ENCODE measurements at regions of chr10 and their contacts with region 1.

Region 1: GRCh38 chr10:132446661-132447194 is 49.7 kb downstream of the PWWP2B start:
- DNase-seq: peak; percentile 91
- H3K4me3 Mint-ChIP-seq: peak overlapping the region; percentile 67
- H3K27ac Mint-ChIP-seq: peak overlapping the region; percentile 94
- H3K4me1 Mint-ChIP-seq: peaks cover 30% of the 10 kb centered on the region
- H3K27me3 Mint-ChIP-seq: no peaks in the 10 kb centered on the region

Region 2: DNA sequence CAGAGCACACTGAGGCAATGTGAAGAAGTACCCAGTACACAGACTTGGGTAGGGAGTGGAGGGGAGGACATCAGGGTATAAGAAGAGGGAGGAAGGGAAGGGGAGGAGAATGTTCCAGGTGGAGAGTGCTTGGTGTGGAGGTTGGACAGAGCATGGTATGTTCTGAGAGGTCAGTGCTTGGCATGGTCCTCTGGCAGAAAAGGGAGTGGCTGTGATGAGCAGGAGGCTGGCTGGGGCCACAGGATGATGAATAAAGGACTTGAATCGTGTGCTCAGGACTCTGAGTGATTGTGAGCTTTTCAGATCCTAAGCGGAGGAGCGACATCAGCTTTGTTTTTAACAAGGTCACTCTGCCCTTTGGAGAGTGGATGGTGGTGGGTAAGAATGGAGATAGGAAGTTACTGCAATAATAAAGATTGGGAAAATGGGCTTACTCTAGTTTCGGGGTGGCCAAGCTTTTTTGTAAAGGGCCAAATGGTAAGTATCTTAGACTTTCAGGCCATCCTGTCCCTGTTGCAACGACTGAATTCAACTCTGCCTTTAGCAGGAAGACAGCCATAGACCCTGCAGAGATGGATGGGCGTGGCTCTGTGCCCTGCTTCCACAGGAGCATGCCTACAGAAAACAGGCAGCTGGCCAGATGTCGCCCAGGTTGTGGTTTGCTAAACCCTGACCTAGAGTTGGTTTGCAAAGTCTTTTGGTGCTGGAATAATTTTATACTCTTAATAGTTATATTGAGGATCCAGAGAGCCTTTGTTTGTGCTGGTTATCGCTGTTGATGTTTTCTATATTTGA is 537.5 kb before region 1 on chr10:
- CTCF ChIA-PET with region 1: no interaction called
- POLR2A ChIA-PET with region 1: no interaction called
- intact Hi-C with region 1: loop called (anchors 5 kb)
- DNase-seq: peak; percentile 8
- H3K4me3 Mint-ChIP-seq: no peak overlapping the region
- H3K27ac Mint-ChIP-seq: peak overlapping the region; percentile 38
- H3K4me1 Mint-ChIP-seq: peaks cover 73% of the 10 kb centered on the region
- H3K27me3 Mint-ChIP-seq: no peaks in the 10 kb centered on the region

Region 3: GRCh38 chr10:132229834-132230556 is 216.7 kb before region 1 on chr10:
- CTCF ChIA-PET with region 1: no interaction called
- POLR2A ChIA-PET with region 1: no interaction called
- intact Hi-C with region 1: loop called (anchors 5 kb)
- DNase-seq: peak; percentile 54
- H3K4me3 Mint-ChIP-seq: peak overlapping the region; percentile 63
- H3K27ac Mint-ChIP-seq: peak overlapping the region; percentile 78
- H3K4me1 Mint-ChIP-seq: peaks cover 18% of the 10 kb centered on the region
- H3K27me3 Mint-ChIP-seq: no peaks in the 10 kb centered on the region

Region 4: GRCh38 chr10:132331526-132332432 is 114.9 kb before region 1 on chr10 and contains the start of gene LRRC27:
- CTCF ChIA-PET with region 1: no interaction called
- POLR2A ChIA-PET with region 1: no interaction called
- intact Hi-C with region 1: loop called (anchors 2 kb)
- DNase-seq: peak; percentile 99
- H3K4me3 Mint-ChIP-seq: peak within 1 kb of the TSS; percentile 90
- H3K27ac Mint-ChIP-seq: peak within 1 kb of the TSS; percentile 91
- H3K4me1 Mint-ChIP-seq: peaks cover 48% of the 10 kb centered on the region
- H3K27me3 Mint-ChIP-seq: peaks cover 1% of the 10 kb centered on the region
- total RNA-seq, gene LRRC27: 2.5 to 2.8 TPM

Region 5: DNA sequence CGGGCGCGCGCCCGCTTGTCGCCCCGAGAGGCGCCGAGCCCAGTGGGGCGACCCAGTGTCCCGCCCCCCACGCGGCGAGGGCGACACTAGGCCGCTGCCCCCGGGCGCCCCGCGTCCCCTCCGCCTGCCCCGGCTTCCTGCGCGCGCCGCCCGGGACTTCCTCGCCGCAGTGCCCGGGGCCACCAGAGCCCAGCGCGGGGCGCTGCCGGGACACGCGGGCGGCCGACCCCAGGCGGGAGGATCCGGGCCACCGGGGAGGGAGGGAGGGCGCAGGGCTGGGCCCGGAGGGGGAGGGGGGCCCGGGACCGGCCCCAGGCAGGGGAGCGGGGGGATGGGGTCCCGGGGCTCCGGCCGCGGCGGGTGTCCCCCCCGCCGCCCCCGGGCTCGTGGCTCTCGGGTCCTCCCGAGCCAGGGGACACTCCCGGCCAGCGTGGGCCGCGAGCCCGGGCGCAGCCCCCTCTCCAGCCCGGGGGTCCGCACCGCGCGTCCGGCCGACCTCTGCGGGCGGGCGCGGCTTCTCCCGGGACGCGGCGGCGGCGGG is 50.2 kb before region 1 on chr10:
- CTCF ChIA-PET with region 1: interaction called, 8 read pairs
- POLR2A ChIA-PET with region 1: interaction called, 8 read pairs
- intact Hi-C with region 1: loop called (anchors 2 kb)
- DNase-seq: peak; percentile 72
- H3K4me3 Mint-ChIP-seq: no peak overlapping the region
- H3K27ac Mint-ChIP-seq: no peak overlapping the region
- H3K4me1 Mint-ChIP-seq: peaks cover 12% of the 10 kb centered on the region
- H3K27me3 Mint-ChIP-seq: no peaks in the 10 kb centered on the region

Region 6: GRCh38 chr10:133394064-133394663 is 947.4 kb after region 1 on chr10 and contains the start of gene MTG1:
- CTCF ChIA-PET with region 1: no interaction called
- POLR2A ChIA-PET with region 1: no interaction called
- intact Hi-C with region 1: loop called (anchors 5 kb)
- DNase-seq: peak; percentile 96
- H3K4me3 Mint-ChIP-seq: peak within 1 kb of the TSS; percentile 96
- H3K27ac Mint-ChIP-seq: peak within 1 kb of the TSS; percentile 95
- H3K4me1 Mint-ChIP-seq: peaks cover 49% of the 10 kb centered on the region
- H3K27me3 Mint-ChIP-seq: no peaks in the 10 kb centered on the region
- total RNA-seq, gene MTG1: 33.9 to 40.3 TPM